ENCODE measurements at regions of chr12 and their contacts with region 1.

Region 1: DNA sequence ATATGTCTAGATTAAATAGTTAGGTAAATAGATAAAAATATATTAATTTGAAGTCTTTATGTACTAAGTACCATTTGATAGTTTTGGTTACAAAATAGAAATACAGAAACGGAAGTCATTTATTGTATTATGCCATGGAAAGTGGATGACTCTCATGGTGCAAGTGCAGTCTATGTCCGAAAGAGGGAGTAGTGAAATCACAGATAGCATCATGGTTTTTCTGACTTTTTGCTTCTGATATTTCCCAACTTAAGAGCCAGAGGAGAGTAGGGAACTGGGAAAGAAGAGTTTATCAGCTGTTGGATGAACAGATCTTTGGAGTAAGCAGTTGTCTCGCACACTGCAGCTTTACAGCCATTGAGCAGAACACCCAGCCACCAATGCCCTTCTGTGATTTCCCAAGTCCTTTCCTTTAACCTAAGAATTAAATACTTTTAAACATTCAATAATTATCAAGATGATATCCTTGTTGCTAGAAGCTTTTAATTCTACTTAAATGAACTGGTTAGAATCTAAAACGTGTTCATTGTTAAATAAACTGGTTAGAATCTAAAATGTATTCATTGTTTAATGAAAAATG is 18.4 kb upstream of the SRGAP1 start:
- DNase-seq: peak; percentile 66
- H3K4me3 ChIP-seq: no peak overlapping the region
- H3K27ac ChIP-seq: no peak overlapping the region
- H3K4me1 ChIP-seq: peaks cover 2% of the 10 kb centered on the region
- H3K27me3 ChIP-seq: peaks cover 1 to 4% of the 10 kb centered on the region in 2 experiments
- CTCF ChIP-seq: peak; percentile 61 to 72
- POLR2A ChIP-seq: no peak

Region 2: GRCh38 chr12:63124778-63125177 is 701.3 kb before region 1 on chr12:
- CTCF ChIA-PET with region 1: no interaction called
- POLR2A ChIA-PET with region 1: no interaction called
- dilution Hi-C with region 1: no loop called
- intact Hi-C with region 1: no loop called
- DNase-seq: no peak
- H3K4me3 ChIP-seq: no peak overlapping the region
- H3K27ac ChIP-seq: no peak overlapping the region
- H3K4me1 ChIP-seq: no peaks in the 10 kb centered on the region
- H3K27me3 ChIP-seq: no peaks in the 10 kb centered on the region
- CTCF ChIP-seq: no peak
- POLR2A ChIP-seq: no peak

Region 3: GRCh38 chr12:63838411-63838810 is 12.3 kb after region 1 on chr12:
- CTCF ChIA-PET with region 1: interaction called, 15 read pairs
- POLR2A ChIA-PET with region 1: no interaction called
- dilution Hi-C with region 1: no loop called
- intact Hi-C with region 1: no loop called
- DNase-seq: no peak
- H3K4me3 ChIP-seq: no peak overlapping the region
- H3K27ac ChIP-seq: no peak overlapping the region
- H3K4me1 ChIP-seq: peaks cover 3% of the 10 kb centered on the region
- H3K27me3 ChIP-seq: peaks cover 2% of the 10 kb centered on the region in 2 experiments
- CTCF ChIP-seq: no peak
- POLR2A ChIP-seq: no peak

Region 4: DNA sequence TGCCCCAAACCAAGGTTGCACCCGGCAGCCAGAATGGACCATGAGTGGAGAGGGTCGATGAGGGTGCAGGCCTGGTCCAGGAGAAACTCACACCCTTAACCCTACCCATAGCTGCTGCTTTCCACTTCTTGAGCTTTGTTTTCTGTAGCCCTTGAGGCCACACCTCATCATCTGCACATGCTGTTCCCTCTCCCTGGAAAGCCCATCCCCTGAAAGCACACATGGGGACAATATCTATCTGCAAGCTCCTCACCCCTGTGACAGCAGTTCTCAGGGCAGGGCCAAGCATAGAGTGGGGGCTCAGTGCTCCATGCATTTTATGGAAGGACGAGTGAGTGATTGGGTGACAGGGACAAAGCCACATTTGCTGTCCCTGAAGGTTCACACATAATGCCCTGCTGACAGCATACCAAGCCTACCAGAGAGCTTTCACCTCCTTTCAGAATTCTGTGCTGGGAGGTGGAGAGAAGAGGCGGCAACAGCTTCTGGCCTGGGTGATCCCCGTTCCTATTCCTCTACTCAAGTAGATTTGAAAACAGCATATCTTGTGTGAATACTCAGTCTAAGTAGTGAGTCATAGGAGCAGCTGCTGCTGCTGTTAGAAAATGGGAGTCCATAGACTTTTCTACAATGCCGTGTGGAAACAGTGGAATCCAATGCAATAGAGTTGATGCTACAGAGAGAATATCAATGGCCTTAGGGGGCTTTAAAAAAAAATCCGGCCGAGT is 63.0 kb after region 1 on chr12:
- CTCF ChIA-PET with region 1: no interaction called
- POLR2A ChIA-PET with region 1: no interaction called
- dilution Hi-C with region 1: no loop called
- intact Hi-C with region 1: no loop called
- DNase-seq: no peak
- H3K4me3 ChIP-seq: no peak overlapping the region
- H3K27ac ChIP-seq: no peak overlapping the region
- H3K4me1 ChIP-seq: no peaks in the 10 kb centered on the region
- H3K27me3 ChIP-seq: no peaks in the 10 kb centered on the region
- CTCF ChIP-seq: no peak
- POLR2A ChIP-seq: no peak

Region 5: GRCh38 chr12:64256166-64256800 is 430.2 kb after region 1 on chr12:
- CTCF ChIA-PET with region 1: interaction called, 16 read pairs
- POLR2A ChIA-PET with region 1: no interaction called
- dilution Hi-C with region 1: no loop called
- intact Hi-C with region 1: loop called (anchors 1 kb)
- DNase-seq: peak; percentile 61
- H3K4me3 ChIP-seq: no peak overlapping the region
- H3K27ac ChIP-seq: no peak overlapping the region
- H3K4me1 ChIP-seq: no peaks in the 10 kb centered on the region
- H3K27me3 ChIP-seq: no peaks in the 10 kb centered on the region
- CTCF ChIP-seq: peak; percentile 25 to 27
- POLR2A ChIP-seq: no peak